AG04449 (cell line): ENCODE measurements at regions of chr11 and their contacts with region 1.

Region 1: GRCh38 chr11:33970984-33971466 is 79.1 kb upstream of the LMO2 start:
- DNase-seq: no peak
- H3K4me3 ChIP-seq: no peak overlapping the region
- CTCF ChIP-seq: peak; percentile 69

Region 2: GRCh38 chr11:33808228-33808828 is 162.7 kb before region 1 on chr11:
- CTCF ChIA-PET with region 1: interaction called, 50 read pairs
- POLR2A ChIA-PET with region 1: no interaction called
- DNase-seq: peak; percentile 26
- H3K4me3 ChIP-seq: no peak overlapping the region
- CTCF ChIP-seq: peak; percentile 87

Region 3: GRCh38 chr11:33829433-33830141 is 141.4 kb before region 1 on chr11:
- CTCF ChIA-PET with region 1: interaction called, 19 read pairs
- POLR2A ChIA-PET with region 1: no interaction called
- DNase-seq: peak; percentile 12
- H3K4me3 ChIP-seq: peak overlapping the region; percentile 53
- CTCF ChIP-seq: peak; percentile 73

Region 4: GRCh38 chr11:33835143-33835878 is 135.7 kb before region 1 on chr11:
- CTCF ChIA-PET with region 1: interaction called, 19 read pairs
- POLR2A ChIA-PET with region 1: no interaction called
- DNase-seq: peak; percentile 53
- H3K4me3 ChIP-seq: no peak overlapping the region
- CTCF ChIP-seq: no peak

Region 5: DNA sequence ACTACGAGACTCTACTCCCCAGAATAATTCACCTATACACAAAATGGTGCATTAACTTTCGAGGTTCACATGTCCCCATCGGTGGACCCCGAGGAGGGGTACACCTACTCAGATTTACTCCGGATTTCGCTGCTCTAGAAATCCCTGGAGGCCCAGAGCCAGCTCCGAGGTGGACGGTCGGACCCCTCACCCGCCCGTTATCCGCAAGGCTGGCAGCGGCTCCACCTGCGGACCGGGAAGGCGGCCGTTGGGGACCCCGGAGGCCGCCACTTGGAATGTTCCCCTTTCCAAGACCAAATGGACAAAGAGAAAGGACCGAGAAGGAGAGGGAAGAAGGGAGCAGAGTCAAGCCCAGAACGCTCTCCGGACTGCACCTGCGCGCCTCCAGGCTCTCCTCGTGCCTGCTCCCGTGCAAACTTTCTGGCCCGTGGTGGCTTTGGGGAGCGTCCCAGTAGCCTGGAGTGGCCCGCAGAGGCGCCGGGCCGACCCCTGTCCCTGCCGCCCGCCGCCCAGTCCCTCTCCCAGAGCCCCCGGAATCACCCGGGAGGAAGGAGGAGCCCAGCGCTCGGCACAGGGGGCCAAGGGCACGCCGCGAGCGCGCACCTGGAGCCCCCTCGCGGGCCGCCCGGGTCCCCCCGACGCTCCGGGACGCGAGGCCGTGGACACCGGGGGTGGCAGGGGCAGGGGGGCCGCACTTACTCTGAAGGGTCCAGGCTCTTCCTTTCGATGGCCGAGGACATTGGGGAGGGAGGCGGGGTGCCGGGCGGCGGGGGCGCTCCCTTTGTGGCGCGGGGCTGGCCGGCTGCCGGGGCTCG is 102.2 kb before region 1 on chr11:
- CTCF ChIA-PET with region 1: interaction called, 261 read pairs
- POLR2A ChIA-PET with region 1: no interaction called
- DNase-seq: no peak
- H3K4me3 ChIP-seq: no peak overlapping the region
- CTCF ChIP-seq: no peak

Region 6: DNA sequence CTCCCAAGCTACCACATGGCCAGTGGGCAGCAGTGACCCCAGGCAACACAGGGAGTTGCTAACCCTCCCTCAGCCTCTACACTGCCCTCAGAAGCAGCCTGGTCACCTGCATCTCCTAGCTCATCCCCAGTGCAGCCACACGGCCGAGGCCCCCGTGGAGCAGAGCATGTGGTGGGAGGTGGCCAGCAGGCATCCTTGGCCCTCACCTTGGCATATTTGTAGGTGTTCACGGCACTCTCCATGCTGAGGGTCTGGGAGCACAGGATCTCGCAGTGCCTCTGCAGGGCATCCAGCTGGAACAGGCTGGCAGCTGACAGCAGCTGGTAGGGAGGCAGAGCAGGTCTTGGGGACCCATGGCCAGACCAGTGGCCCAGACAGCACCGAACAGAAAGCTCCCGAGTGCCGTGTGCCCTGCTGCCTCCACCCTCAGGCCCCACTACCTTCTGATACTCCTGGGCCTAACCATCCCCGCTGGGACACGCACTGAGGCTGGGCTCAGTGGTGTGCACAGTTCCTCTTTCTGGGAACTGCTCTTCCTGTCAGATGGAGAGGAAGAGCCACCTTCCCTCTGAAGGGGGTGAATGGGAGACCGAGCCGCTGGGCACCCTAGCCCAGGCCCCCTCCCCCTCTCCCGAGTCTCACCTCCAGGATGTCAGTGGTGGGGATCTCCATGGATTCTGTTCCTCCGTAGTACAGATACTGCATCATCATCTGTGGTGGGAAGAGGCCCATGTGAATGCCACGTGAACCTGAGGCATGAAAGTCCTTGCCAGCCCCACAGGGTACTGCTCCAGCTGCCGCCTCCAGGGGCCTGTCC is 183.2 kb after region 1 on chr11:
- CTCF ChIA-PET with region 1: no interaction called
- POLR2A ChIA-PET with region 1: no interaction called
- DNase-seq: no peak
- H3K4me3 ChIP-seq: no peak overlapping the region
- CTCF ChIP-seq: no peak

Region 7: DNA sequence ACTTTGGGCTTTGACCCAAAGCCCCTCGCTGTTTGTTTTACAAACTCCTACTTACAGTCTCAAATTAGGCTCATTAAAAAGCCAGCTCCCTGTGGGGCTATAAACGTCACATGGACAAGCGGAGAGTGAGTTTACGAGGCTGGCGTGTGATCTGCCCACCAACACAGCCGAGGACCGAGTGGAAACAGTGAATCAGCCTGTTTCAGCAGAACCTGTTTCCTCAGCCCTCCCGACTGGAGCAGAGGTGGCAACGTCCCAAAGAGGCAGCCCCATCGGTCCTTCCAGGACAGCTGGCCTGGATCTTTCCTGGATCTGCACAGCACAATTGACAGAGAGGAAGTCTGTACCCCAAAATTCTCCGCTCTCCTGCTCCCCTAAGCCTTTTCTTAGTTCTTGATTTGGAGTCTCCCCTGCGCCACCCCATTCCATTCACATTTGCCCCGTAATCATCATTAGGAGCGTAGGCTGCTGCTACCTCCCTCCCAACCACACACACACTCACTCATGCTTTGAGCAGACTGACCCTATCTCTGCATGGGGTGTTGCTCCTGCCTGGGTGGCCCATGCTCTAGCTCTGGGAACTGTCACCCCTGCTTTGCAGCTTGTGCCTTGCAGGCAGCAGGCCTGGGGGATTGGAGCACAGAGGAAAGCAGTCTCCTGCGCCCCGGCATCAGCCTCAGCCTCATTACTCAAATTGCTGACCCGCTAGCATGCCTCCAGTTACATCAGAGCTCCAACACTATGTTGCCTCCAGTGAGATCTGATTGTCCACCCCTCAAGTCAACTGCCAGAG is 252.2 kb after region 1 on chr11:
- CTCF ChIA-PET with region 1: no interaction called
- POLR2A ChIA-PET with region 1: no interaction called
- DNase-seq: peak; percentile 24
- H3K4me3 ChIP-seq: no peak overlapping the region
- CTCF ChIP-seq: no peak